Caco-2 (cell line): ENCODE measurements at regions of chr16 and their contacts with region 1.

Region 1: DNA sequence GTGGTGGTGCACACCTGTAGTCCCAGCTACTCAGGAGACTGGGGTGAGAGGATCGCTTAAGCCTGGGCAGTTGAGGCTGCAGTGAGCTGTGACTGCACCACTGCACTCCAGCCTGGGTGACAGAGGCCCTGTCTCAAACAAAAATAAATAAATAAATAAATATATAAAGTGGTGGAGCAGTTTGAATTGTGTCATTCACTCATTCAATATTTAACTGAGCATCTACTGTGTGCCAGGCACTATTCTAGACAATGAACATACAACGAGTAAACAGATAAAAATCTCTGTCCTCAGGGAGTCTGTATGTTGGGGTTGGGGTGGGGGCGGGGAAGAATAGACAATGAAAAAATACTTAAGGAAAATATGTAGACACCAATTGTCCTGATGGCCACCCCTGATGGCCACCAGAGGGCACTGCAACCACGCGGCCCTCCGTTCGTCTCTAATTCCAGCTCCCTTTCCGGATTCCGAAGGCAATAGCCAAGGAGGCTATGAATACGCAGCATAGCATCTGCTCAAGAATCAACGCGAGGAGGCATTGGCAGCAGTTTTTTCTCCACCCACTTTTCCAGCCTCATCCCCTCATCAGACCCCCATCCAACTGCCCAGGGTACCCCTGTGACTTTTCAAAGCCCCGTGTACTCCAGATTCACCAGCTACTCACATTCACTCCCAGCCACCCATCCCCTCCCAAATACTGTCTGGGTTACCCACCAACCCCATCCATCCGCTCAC is 21.4 kb downstream of the QPRT start:
- DNase-seq: peak; percentile 76 to 81
- H3K4me3 ChIP-seq: no peak overlapping the region
- H3K4me3 Mint-ChIP-seq: no peak overlapping the region
- H3K27ac Mint-ChIP-seq: no peak overlapping the region
- H3K4me1 ChIP-seq: 0 out of 2 replicates have a peak, but pooled peaks cover 2% of the 10 kb centered on the region
- H3K4me1 Mint-ChIP-seq: no peaks in the 10 kb centered on the region
- H3K27me3 ChIP-seq: no peaks in the 10 kb centered on the region
- H3K27me3 Mint-ChIP-seq: no peaks in the 10 kb centered on the region
- CTCF ChIP-seq: peak; percentile 77 to 89

Region 2: DNA sequence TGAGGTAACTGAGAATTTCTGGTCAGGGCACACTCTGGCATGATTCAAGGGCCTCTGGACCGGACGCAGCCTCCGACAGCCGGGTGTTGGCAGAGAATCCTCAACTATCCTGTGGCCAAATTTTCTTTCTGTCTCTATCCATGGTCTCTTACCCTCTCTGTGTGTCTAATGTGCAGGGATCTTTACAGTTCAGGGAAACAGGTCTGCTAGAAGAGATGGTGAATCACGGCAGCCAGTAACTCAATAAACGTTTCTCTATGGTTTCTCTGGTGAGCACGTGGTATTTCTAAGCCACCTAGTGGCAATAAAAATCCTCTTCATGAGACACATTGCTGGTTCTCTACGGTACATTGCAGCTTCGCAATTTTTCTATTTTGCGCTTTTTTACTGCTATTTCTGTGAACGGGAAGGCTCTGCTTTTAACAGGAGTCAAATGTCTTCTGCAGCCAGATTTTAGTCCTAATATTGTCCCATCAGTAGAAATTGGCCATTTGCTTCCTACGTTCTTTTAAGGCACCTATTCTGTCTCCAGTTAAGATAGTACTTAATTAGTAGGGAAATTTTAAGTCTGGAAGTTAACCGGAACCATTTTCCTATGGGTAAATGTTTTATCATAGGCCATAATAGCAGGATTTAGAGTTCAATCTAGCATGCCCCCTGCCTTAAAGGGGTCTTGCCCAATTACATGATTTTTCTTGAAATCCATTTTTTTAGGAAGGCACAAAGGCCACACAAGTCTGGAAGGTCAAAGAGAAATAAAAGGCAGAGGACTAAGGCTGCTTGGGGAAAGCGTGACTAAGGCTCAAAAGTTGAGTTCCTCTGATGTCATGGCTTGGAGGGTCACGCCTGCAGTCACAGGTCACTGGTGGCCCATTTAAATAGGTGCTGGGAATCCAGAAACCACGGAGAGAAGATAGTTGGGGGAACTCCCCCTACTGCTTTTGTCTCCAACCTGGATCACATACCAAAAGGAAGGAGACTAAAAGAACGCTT is 10.1 kb after region 1 on chr16:
- CTCF ChIA-PET with region 1: interaction called, 7 read pairs
- POLR2A ChIA-PET with region 1: no interaction called
- intact Hi-C with region 1: loop called (anchors 1 kb)
- DNase-seq: peak in 1 of 2 experiments; percentile 56
- H3K4me3 ChIP-seq: no peak overlapping the region
- H3K4me3 Mint-ChIP-seq: no peak overlapping the region
- H3K27ac Mint-ChIP-seq: peak overlapping the region; percentile 36
- H3K4me1 ChIP-seq: no peaks in the 10 kb centered on the region; the same call in 1 of the 2 replicates
- H3K4me1 Mint-ChIP-seq: peaks cover 14% of the 10 kb centered on the region
- H3K27me3 ChIP-seq: no peaks in the 10 kb centered on the region
- H3K27me3 Mint-ChIP-seq: no peaks in the 10 kb centered on the region
- CTCF ChIP-seq: peak; percentile 54 to 64

Region 3: GRCh38 chr16:29729116-29729521 is 28.7 kb after region 1 on chr16:
- CTCF ChIA-PET with region 1: interaction called, 12 read pairs
- POLR2A ChIA-PET with region 1: no interaction called
- intact Hi-C with region 1: no loop called
- DNase-seq: peak; percentile 43 to 49
- H3K4me3 ChIP-seq: no peak overlapping the region
- H3K4me3 Mint-ChIP-seq: peak overlapping the region; percentile 52
- H3K27ac Mint-ChIP-seq: no peak overlapping the region
- H3K4me1 ChIP-seq: peaks cover 4% of the 10 kb centered on the region; the same call in 1 of the 2 replicates
- H3K4me1 Mint-ChIP-seq: peaks cover 8% of the 10 kb centered on the region
- H3K27me3 ChIP-seq: no peaks in the 10 kb centered on the region
- H3K27me3 Mint-ChIP-seq: no peaks in the 10 kb centered on the region
- CTCF ChIP-seq: peak; percentile 66 to 72

Region 4: DNA sequence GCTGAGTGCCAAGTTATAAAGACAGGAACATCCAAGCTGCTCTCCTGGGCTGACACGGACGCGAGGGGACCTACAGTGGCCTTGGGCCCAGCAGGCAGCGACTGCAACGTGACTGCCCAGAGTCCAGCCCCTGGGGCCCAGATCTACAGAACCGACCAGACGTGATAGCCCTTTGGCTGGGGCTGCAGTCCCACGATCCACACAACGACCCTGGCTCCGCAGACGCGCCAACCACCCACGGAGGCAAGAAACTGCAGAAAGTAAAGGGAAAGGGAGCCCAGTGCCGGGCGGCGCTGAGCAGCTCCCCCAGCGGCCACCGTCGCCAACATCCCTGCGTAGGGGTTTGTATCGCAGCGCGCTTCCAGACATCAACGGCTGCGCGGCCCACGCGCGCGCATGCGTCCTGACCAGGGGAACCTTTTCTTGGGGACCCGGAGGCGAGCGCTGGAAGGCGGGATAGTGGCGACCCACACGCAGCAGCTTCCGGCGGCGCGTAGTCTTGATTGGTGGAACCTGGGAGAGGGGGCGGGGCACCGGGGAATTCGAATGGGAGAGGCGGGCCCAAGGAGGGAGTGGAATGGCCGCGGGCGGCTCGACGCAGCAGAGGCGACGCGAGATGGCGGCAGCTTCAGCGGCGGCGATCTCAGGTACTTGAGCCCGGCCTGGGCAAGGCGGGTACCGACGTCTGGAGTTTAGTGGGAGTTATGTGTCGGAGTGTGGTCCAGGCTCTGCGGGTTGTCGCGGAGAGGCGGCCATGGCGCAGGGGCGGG is 89.9 kb after region 1 on chr16 and contains the start of gene KIF22:
- CTCF ChIA-PET with region 1: interaction called, 10 read pairs
- POLR2A ChIA-PET with region 1: interaction called, 6 read pairs
- intact Hi-C with region 1: loop called (anchors 1 kb)
- DNase-seq: peak; percentile 98 to 99
- H3K4me3 ChIP-seq: peak within 1 kb of the TSS; percentile 98
- H3K4me3 Mint-ChIP-seq: peak within 1 kb of the TSS; percentile 79
- H3K27ac Mint-ChIP-seq: peak within 1 kb of the TSS; percentile 92
- H3K4me1 ChIP-seq: 0 out of 2 replicates have a peak, but pooled peaks cover 5% of the 10 kb centered on the region
- H3K4me1 Mint-ChIP-seq: peaks cover 22% of the 10 kb centered on the region
- H3K27me3 ChIP-seq: no peaks in the 10 kb centered on the region
- H3K27me3 Mint-ChIP-seq: no peaks in the 10 kb centered on the region
- CTCF ChIP-seq: peak; percentile 52 to 83
- total RNA-seq, gene KIF22: 134 and 152 TPM in 2 replicates

Region 5: DNA sequence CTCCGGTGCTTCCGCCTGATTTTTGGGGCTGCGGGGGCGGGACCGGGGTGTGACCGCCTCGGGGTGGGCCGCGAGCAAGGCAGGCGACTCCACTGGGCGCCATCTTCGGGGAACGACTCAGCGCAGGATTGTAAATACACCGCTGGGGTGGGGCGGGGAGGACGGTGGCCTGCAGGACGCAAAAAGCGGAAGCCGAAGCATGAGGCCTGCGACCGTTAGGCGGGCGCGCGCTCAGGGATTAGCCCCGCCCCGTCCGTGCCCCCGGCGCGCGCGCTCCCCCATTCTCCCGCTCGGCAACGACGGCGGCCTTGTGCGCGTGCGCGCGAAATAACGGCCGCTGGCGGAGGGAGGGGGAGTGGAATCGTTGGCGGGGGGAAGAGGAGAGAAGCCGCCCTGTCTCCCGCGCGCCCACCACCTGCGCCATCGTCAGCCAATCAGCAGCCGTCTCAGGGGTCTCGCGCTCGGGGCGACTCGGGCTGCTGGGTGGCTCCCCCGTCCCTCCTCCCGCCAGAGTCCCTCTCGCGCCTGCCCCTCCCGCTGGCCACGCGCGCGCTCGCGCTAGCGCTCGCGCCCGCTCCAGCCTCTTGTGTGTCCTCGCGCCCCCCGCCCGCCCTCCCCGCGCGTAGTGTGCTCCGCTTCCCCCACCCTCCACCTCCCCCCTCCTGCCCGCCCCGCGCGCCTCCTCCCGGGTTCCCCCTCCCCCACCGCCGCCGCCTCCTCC is 105.1 kb after region 1 on chr16:
- CTCF ChIA-PET with region 1: interaction called, 5 read pairs
- POLR2A ChIA-PET with region 1: interaction called, 4 read pairs
- intact Hi-C with region 1: loop called (anchors 5 kb)
- DNase-seq: peak; percentile 96 to 97
- H3K4me3 ChIP-seq: peak overlapping the region; percentile 59
- H3K4me3 Mint-ChIP-seq: peak overlapping the region; percentile 79
- H3K27ac Mint-ChIP-seq: peak overlapping the region; percentile 92
- H3K4me1 ChIP-seq: peaks cover 20% of the 10 kb centered on the region; the same call in 1 of the 2 replicates
- H3K4me1 Mint-ChIP-seq: peaks cover 26% of the 10 kb centered on the region
- H3K27me3 ChIP-seq: no peaks in the 10 kb centered on the region
- H3K27me3 Mint-ChIP-seq: no peaks in the 10 kb centered on the region
- CTCF ChIP-seq: no peak

Region 6: DNA sequence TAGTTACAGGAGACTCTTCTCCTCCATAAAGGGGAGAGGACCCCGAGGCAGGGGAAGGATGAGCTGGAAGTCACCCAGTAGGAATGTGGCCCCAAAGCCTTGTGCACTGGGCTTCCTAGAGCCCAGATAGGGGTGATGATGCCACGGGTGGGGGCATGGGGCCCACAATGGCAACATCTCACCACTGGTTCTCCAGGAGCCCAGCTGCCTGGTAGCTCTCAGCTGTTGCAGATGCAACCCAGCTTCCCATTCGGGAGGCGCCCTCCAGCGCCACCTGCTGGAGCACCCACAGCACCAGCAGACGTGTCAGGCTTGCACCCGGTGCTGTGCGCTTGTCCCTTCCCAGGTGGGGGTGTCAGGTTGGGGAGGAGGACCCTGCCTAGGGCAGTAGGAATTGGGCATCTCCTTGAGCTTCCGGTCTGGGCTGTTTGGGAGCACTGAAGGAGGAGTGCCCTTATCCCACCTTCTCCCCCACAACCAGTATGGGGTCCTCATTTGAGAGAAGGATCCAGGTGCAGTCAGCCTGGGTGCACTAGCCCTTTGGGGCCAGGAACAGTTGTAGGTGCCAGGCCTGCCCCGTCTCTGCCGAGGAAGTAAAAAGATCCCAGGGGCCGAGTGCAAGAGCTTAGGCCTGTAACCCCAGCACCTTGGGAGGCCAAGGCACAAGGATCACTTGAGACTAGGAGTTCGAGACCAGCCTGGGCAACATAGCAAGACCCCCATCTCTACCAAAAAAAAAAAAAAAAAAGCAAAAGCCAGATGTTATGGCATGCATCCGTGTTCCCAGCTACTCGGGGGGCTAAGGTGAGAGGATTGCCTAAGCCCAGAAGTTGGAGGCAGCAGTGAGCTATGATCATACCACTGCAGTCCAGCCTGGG is 148.2 kb after region 1 on chr16:
- CTCF ChIA-PET with region 1: interaction called, 15 read pairs
- POLR2A ChIA-PET with region 1: no interaction called
- intact Hi-C with region 1: no loop called
- DNase-seq: peak; percentile 65 to 70
- H3K4me3 ChIP-seq: no peak overlapping the region
- H3K4me3 Mint-ChIP-seq: no peak overlapping the region
- H3K27ac Mint-ChIP-seq: no peak overlapping the region
- H3K4me1 ChIP-seq: peaks cover 7% of the 10 kb centered on the region; the same call in 1 of the 2 replicates
- H3K4me1 Mint-ChIP-seq: peaks cover 6% of the 10 kb centered on the region
- H3K27me3 ChIP-seq: no peaks in the 10 kb centered on the region
- H3K27me3 Mint-ChIP-seq: no peaks in the 10 kb centered on the region
- CTCF ChIP-seq: peak; percentile 55 to 73

Region 7: GRCh38 chr16:30018731-30019158 is 318.3 kb after region 1 on chr16:
- CTCF ChIA-PET with region 1: no interaction called
- POLR2A ChIA-PET with region 1: no interaction called
- intact Hi-C with region 1: loop called (anchors 2 kb)
- DNase-seq: no peak
- H3K4me3 ChIP-seq: no peak overlapping the region
- H3K4me3 Mint-ChIP-seq: no peak overlapping the region
- H3K27ac Mint-ChIP-seq: no peak overlapping the region
- H3K4me1 ChIP-seq: no peaks in the 10 kb centered on the region
- H3K4me1 Mint-ChIP-seq: no peaks in the 10 kb centered on the region
- H3K27me3 ChIP-seq: no peaks in the 10 kb centered on the region
- H3K27me3 Mint-ChIP-seq: no peaks in the 10 kb centered on the region
- CTCF ChIP-seq: no peak